ENCODE measurements at regions of chr11 and their contacts with region 1.

Region 1: DNA sequence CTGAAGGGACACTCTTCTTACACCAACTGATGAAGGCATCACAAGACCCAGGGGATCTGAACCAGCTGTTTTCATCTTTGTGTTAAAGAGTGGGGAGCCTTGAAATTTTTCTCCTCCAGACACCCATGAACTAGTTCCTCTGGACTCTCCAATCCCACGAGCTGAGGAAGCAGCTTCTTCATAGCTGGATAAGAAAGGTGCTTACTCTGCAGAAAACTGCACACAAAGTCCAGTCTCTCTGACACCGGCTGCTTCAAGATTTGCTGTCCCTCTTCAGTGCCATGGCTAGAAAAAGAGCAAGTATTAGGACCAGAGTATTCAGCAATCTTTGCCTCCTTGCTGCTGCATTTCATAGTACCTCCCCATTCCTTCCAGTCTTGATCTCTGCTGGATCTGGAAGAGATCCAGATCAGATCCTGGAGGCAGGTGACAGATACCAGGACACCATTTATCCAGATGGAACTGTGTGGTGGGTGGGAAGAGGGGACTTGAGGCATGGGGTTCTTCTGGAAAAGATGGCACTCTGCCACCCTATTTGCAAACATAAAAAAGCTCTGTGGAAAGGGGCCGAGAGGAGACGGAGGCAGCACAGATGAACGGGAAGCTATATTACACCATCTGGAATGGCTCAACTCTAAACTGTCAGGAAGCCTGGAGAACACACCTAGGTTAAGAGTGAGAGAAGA is 25.5 kb downstream of the IL18BP start:
- DNase-seq: no peak
- H3K4me3 Mint-ChIP-seq: no peak overlapping the region
- H3K27ac Mint-ChIP-seq: no peak overlapping the region
- H3K4me1 Mint-ChIP-seq: peaks cover 17% of the 10 kb centered on the region
- H3K27me3 Mint-ChIP-seq: no peaks in the 10 kb centered on the region

Region 2: DNA sequence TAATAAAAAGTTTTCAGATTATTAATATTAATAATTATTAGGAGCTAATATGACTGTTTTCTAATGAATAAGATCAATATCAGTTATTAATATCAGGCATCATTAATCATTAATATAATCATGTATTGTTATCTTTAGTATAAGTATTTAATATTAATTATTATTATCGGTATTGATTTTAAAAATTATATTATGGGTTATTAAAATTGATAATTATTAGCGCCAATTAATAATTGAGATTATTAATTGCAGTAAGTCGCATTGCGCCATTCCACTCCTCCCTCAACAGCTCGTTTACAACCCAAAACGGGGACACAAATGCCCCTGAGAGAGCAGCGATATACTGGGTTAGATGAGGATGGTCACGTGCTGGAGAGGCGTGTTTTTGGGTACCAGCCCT is 116.0 kb before region 1 on chr11:
- CTCF ChIA-PET with region 1: no interaction called
- POLR2A ChIA-PET with region 1: no interaction called
- DNase-seq: no peak
- H3K4me3 Mint-ChIP-seq: no peak overlapping the region
- H3K27ac Mint-ChIP-seq: no peak overlapping the region
- H3K4me1 Mint-ChIP-seq: peaks cover 12% of the 10 kb centered on the region
- H3K27me3 Mint-ChIP-seq: no peaks in the 10 kb centered on the region

Region 3: DNA sequence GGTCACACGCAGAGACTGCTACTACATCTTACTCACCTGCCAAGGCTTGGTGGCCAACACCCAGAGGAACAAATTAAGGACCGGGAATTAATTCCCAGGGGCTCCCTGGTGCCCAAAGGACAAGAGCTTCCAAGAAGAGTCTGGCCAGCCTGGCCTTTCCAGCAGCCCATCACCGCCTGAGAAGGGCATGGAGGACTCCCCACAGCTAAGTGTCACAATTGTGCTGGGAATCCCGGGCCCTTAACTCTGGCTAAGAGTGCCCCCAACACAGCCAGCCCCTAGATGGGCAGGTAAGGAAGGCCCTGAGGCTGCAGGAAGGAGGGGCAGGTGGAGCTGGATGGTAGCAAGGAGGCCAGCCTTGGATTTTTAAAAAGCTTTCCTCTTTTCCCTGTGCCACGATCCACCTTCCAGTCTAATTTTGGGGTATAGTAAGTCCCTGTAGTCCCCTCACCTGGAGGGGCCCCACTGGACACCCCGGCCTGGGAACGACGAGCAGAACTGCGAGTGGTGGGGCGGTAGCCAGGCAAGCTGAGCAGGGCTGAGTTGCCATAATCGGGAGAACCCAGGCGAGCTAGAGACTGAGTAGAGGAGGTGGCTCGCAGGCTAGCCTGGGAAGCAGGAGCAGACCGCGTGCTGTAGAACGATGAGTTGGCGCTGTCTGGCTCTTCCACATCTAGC is 18.5 kb before region 1 on chr11:
- CTCF ChIA-PET with region 1: no interaction called
- POLR2A ChIA-PET with region 1: no interaction called
- DNase-seq: no peak
- H3K4me3 Mint-ChIP-seq: no peak overlapping the region
- H3K27ac Mint-ChIP-seq: no peak overlapping the region
- H3K4me1 Mint-ChIP-seq: no peaks in the 10 kb centered on the region
- H3K27me3 Mint-ChIP-seq: no peaks in the 10 kb centered on the region

Region 4: GRCh38 chr11:72085621-72086351 is 61.6 kb after region 1 on chr11:
- CTCF ChIA-PET with region 1: interaction called, 104 read pairs
- POLR2A ChIA-PET with region 1: interaction called, 8 read pairs
- DNase-seq: no peak
- H3K4me3 Mint-ChIP-seq: no peak overlapping the region
- H3K27ac Mint-ChIP-seq: no peak overlapping the region
- H3K4me1 Mint-ChIP-seq: peaks cover 40% of the 10 kb centered on the region
- H3K27me3 Mint-ChIP-seq: no peaks in the 10 kb centered on the region

Region 5: DNA sequence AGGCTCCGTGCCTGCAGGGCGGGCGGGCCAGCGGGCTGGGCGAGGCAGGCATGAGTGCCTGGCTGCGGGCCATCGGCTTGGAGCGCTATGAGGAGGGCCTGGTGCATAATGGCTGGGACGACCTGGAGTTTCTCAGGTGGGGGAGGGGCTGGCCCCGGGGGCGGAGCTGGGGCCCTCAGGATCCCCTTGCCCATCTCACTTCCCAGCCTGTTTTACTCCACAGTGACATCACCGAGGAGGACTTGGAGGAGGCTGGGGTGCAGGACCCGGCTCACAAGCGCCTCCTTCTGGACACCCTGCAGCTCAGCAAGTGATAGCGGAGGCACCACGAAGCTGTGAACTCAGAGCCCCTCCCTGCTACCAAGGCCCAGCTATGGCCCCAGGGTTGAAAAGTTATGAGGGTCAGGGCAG is 213.8 kb after region 1 on chr11:
- CTCF ChIA-PET with region 1: interaction called, 11 read pairs
- POLR2A ChIA-PET with region 1: no interaction called
- DNase-seq: peak; percentile 65
- H3K4me3 Mint-ChIP-seq: no peak overlapping the region
- H3K27ac Mint-ChIP-seq: no peak overlapping the region
- H3K4me1 Mint-ChIP-seq: peaks cover 12% of the 10 kb centered on the region
- H3K27me3 Mint-ChIP-seq: peaks cover 38% of the 10 kb centered on the region